Activated naive CD4-positive, alpha-beta T cell treated with anti-CD3 and anti-CD28 coated beads for 36 hours (primary cell): ENCODE measurements at regions of chr9 and their contacts with region 1.

Region 1: DNA sequence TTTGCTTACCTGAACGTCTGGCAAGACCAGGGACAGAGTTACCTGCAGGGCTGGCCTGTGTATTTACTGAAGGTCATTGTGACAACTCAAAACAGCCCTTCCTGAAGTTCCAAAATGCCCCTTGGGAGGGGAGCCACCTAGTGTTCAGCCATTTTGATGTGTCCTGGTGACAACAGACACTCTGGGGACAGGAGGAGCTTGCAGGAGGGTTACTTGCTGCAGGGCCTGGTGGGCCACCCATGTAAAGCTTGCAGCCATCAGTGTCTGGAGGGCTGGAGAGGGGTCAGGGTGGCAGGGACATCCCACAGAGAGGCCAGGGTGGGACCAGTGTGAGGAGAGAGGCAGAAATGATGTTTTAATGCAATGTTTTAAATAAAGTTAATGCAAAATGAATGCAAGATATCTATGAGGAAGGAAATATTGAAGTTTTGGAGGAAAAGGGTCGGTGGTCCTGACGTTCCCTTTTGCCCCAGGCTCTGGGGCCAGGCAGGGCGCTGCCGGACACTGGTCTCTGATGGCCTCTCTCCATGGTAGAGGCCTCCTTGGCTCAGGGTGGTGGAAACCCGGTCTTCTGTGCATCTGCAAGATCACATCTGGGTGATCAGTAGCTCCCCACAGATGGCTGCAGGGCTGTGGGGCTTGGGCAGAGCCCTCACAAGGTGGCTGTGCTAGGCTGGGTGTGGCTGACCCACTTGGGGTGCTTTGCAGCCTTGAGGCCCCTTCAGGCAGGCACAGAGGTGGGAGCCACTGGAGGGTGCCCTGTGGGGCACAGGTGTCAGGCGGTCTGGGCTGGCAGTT is 53.7 kb upstream of the RNU6ATAC start:
- DNase-seq: peak; percentile 21
- H3K4me3 Mint-ChIP-seq: no peak overlapping the region
- H3K27ac Mint-ChIP-seq: no peak overlapping the region
- H3K4me1 Mint-ChIP-seq: no peaks in the 10 kb centered on the region
- H3K27me3 Mint-ChIP-seq: no peaks in the 10 kb centered on the region

Region 2: DNA sequence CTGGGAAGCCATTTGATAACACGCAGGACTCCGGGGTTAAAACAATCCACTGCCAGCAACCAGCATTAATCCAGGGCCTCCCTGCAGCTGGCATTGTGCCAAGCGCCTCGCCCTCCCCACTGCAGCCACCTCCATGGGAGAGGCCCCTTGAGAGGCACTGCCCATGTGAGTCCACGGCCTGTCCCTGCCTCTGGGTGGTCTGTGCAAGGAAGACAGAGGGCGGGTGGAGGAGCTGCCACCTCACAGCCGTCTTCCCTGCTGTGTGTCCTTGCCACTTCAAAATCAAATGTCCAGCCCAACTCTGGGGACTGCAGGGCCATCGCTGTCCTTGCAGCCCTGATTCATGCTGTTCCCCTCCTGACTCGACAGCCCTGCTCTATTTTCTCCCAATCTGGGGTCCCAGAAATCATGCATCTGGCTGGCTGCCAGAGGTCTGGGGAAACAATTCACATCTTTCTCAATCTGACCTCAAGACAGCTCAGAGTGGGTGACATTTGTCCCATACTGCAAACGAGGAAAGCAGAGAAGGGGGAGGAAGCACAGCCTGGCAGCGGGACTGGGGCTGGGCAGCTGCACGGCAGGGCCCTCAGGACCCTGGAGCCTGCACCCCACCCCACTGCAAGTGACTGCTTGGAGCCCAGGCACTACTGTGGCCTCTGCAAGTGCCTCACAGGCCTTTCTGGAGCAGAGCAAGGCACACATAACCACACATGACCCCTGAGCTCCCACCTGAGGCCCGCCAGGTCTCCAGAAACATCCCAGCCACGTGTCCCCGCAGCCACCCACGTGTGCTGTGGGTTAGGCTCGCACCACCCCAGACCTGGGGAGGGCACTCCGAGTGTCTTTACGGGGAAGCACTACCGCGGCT is 177.0 kb before region 1 on chr9:
- CTCF ChIA-PET with region 1: no interaction called
- intact Hi-C with region 1: no loop called
- DNase-seq: no peak
- H3K4me3 Mint-ChIP-seq: no peak overlapping the region
- H3K27ac Mint-ChIP-seq: no peak overlapping the region
- H3K4me1 Mint-ChIP-seq: no peaks in the 10 kb centered on the region
- H3K27me3 Mint-ChIP-seq: no peaks in the 10 kb centered on the region

Region 3: DNA sequence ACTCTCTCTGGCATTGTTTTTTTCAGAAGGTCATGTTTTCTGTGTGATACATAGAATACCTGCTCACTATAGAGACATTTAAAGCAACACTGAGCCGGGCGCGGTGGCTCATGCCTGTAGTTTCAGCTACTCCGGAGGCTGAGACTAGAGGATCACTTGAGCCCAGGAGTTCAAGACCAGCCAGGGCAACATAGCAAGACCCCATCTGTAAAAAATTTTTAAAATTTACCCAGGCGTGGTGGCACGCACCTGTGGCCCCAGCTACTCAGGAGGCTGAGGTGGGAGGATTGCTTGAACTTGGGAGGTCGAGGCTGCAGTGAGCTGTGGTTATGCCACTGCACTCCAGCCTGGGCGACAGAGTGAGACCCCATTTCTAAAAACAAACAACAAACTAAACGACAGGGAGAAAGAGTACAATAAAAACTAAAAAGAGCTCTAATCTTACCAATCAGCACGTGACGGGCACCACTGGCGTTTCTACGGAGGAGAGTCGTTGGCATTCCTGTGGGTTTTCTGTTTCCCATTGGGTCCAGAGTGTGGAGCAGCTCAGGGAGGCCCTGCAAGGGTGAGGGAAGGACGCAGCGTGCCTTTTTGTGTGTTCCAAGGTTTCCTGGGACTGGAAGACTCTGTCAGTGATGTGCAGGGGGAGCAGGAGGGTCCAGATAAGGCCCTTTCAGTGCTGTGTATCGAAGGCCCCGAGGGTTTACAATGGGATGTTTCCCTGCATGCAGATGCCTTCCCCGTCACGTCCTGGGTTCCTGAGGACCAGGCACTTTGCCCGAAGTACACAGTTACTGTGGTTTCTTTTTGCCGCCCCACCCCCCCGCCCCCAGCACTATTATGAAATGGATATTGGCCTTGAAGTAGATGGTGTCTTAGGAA is 46.5 kb before region 1 on chr9:
- CTCF ChIA-PET with region 1: interaction called, 3 read pairs
- intact Hi-C with region 1: loop called (anchors 1 kb)
- DNase-seq: no peak
- H3K4me3 Mint-ChIP-seq: no peak overlapping the region
- H3K27ac Mint-ChIP-seq: no peak overlapping the region
- H3K4me1 Mint-ChIP-seq: peaks cover 2% of the 10 kb centered on the region
- H3K27me3 Mint-ChIP-seq: no peaks in the 10 kb centered on the region